Prostate gland (tissue), 2 donors: ENCODE measurements at regions of chr7 and their contacts with region 1.

Region 1: DNA sequence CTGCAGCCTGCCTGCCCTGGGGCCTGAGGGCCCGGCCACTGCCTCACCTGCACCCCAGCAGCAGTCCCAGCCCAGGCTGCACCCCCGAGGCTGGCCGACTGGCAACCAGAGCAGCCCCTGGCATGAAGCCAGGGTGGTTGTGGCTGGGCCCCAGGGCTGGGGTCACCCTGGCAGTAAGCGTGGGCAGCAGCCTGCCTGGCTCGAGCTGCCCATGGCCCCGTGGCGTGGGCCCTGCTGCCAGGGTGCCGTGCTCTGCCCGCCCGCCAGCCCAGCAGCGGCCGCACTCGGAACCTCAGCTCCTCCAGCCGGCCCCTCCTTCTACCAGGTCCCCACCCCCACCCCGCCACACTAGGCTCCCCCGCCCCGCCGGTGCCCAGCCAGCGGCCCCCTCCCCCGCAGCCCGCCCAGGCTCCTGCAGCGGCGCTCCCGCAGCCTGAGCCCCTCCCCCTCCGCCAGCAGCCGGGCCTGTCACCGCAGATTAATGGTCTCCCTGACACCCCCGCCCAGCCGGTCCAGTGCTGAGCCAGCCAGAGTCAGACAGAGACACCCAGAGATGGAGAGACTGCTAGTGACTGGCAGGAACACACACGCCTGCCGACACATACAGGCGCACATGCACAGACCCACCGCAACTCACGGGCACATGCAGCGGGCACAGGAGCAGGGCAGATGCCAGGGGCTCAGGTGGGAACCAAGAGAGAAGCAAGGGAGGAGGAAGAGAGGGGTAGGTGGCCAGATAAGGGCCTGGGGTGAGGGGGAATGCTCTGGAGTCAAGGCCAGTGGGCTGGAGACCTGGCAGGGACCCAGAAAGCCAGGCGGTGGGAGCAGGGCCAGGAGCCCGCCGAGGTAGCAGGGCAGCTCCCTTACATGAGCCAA is 22.4 kb downstream of the KCNH2 start:
- DNase-seq: no peak
- H3K4me3 ChIP-seq: peak overlapping the region in 1 of 2 donors; percentile 7
- H3K27ac ChIP-seq: peak overlapping the region; percentile 56 to 66
- H3K4me1 ChIP-seq: no peaks in the 10 kb centered on the region
- H3K27me3 ChIP-seq: no peaks in the 10 kb centered on the region
- CTCF ChIP-seq: no peak
- POLR2A ChIP-seq: no peak

Region 2: DNA sequence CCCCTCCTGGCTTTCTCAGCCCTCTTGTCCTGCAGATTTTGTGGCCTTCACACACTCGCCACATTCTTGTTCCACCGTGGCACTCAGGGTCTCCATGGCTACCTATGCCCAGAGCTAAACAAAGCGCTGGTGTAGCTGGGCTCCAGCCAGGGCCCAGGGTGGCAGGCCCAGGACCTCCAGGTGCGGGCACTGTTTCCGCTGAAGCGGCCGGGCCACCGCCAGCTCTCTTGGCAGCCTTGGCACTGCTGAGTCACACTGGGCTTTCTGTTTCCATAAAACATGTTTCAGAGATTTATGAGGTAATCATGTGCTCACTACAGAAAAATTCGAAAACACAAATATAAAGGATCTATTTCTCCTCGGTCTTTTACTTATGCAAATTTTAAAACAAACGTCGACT is 52.2 kb before region 1 on chr7:
- intact Hi-C with region 1: loop called (anchors 5 kb)
- DNase-seq: peak; percentile 84
- H3K4me3 ChIP-seq: no peak overlapping the region
- H3K27ac ChIP-seq: peak overlapping the region; percentile 33 to 39
- H3K4me1 ChIP-seq: no peaks in the 10 kb centered on the region
- H3K27me3 ChIP-seq: no peaks in the 10 kb centered on the region
- CTCF ChIP-seq: no peak
- POLR2A ChIP-seq: no peak

Region 3: DNA sequence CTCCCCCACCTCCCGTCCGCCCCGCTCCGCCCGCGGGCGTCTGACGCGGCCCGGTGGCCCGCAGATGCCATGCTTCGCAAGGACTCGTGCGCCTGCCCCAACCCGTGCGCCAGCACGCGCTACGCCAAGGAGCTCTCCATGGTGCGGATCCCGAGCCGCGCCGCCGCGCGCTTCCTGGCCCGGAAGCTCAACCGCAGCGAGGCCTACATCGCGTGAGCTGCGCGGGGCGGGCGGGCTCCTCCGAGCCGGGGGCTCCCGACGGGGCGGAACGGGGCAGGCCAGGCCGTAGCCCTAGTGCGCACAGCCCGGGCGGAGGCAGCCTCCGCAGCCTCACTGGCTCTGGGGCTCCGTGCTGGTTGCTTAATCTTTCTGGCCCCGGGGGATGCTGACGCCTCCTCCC is 95.4 kb after region 1 on chr7:
- intact Hi-C with region 1: no loop called
- DNase-seq: no peak
- H3K4me3 ChIP-seq: no peak overlapping the region
- H3K27ac ChIP-seq: no peak overlapping the region
- H3K4me1 ChIP-seq: no peaks in the 10 kb centered on the region
- H3K27me3 ChIP-seq: no peaks in the 10 kb centered on the region
- CTCF ChIP-seq: no peak
- POLR2A ChIP-seq: no peak